CD4-positive, alpha-beta T cell (primary cell): ENCODE measurements at regions of chr18 and their contacts with region 1.

Region 1: GRCh38 chr18:77207540-77207939 is 42.1 kb upstream of the GALR1 start:
- DNase-seq: peak; percentile 19 to 84 (median 54)
- ATAC-seq: peak; percentile 97
- H3K4me3 ChIP-seq: no peak overlapping the region
- H3K4me3 Mint-ChIP-seq: peak overlapping the region; percentile 92
- H3K27ac ChIP-seq: no peak overlapping the region
- H3K27ac Mint-ChIP-seq: peak overlapping the region; percentile 78
- H3K4me1 ChIP-seq: peaks cover 33% of the 10 kb centered on the region
- H3K4me1 Mint-ChIP-seq: peaks cover 51% of the 10 kb centered on the region
- H3K27me3 ChIP-seq: no peaks in the 10 kb centered on the region
- H3K27me3 Mint-ChIP-seq: no peaks in the 10 kb centered on the region
- CTCF ChIP-seq: peak; percentile 76

Region 2: GRCh38 chr18:76922107-76922506 is 285.4 kb before region 1 on chr18:
- CTCF ChIA-PET with region 1: interaction called, 3 read pairs
- POLR2A ChIA-PET with region 1: no interaction called
- intact Hi-C with region 1: loop called in 1 of 2 experiments (anchors 1 kb)
- DNase-seq: peak; percentile 31 to 75 (median 46)
- ATAC-seq: peak; percentile 99
- H3K4me3 ChIP-seq: no peak overlapping the region
- H3K4me3 Mint-ChIP-seq: no peak overlapping the region
- H3K27ac ChIP-seq: no peak overlapping the region
- H3K27ac Mint-ChIP-seq: peak overlapping the region; percentile 1
- H3K4me1 ChIP-seq: peaks cover 3% of the 10 kb centered on the region
- H3K4me1 Mint-ChIP-seq: peaks cover 22% of the 10 kb centered on the region
- H3K27me3 ChIP-seq: no peaks in the 10 kb centered on the region
- H3K27me3 Mint-ChIP-seq: no peaks in the 10 kb centered on the region
- CTCF ChIP-seq: peak; percentile 68

Region 3: DNA sequence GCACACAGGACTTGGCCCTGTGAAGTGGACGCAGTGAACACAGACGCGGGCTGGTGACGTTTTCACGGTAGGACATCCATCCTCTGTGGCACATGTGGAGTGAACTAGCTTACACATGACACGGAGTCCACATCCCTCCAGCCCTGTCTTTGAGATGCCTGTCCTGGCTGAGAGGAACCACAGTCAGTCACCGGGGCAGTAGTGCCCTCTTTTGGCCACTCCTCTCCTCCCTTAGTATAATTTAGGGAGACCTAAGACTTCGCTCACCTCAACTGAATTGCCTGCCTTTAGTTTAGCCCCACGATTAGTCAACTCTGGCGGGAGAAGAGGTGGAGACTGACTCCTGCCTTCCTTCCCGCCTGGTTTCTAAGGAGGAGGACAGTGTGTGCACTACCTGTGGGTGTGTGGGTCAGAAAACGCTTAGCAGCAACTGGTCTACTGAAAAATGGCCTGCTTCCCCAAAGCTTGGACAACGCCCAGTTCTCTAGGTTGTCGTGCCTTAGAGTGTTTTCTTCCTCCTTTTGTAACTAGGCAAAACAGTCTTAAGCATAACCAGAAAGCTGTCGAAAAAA is 145.5 kb before region 1 on chr18:
- CTCF ChIA-PET with region 1: interaction called, 7 read pairs
- POLR2A ChIA-PET with region 1: interaction called, 3 read pairs
- intact Hi-C with region 1: loop called (anchors 2 to 5 kb)
- DNase-seq: peak in 7 of 14 experiments; percentile 24 to 74 (median 52)
- ATAC-seq: peak; percentile 9
- H3K4me3 ChIP-seq: peak overlapping the region; percentile 28
- H3K4me3 Mint-ChIP-seq: peak overlapping the region; percentile 55
- H3K27ac ChIP-seq: peak overlapping the region; percentile 89 to 93
- H3K27ac Mint-ChIP-seq: peak overlapping the region; percentile 98
- H3K4me1 ChIP-seq: peaks cover 91% of the 10 kb centered on the region
- H3K4me1 Mint-ChIP-seq: peaks cover 82% of the 10 kb centered on the region
- H3K27me3 ChIP-seq: no peaks in the 10 kb centered on the region
- H3K27me3 Mint-ChIP-seq: no peaks in the 10 kb centered on the region
- CTCF ChIP-seq: no peak

Region 4: DNA sequence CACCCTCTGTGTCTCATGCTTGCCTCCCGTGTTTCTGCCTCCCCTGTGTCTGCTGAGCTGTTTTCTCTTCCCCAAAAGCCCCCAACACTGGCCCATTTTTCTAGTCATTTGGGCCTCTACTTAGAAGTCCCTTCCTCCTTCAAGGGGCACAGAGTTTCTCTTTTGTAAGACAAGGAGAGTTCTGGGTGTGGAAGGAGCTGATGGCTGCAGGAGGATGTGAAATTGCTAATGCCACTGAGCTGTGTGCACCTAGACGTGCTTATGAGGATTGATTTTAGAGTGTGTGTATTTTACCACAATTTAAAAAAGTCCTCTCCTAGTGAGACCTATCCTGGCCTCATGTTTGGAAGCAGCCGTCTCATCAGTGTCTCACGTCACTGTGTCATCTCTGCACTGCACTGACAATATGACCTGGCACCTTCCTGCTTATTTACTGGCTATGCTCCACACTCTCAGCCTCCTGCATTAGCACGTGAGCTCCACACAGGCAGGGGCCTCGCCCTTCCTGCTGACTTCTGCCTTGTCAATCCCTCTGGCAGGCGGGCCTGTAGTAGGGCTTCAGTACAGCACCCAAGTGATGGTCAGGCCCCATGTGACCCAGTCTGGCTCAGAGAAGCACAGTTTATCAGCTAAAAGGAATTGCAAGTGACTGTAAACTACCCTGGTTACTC is 67.0 kb before region 1 on chr18:
- CTCF ChIA-PET with region 1: interaction called, 3 read pairs
- POLR2A ChIA-PET with region 1: interaction called, 6 read pairs
- intact Hi-C with region 1: loop called in 1 of 2 experiments (anchors 5 kb)
- DNase-seq: peak in 13 of 14 experiments; percentile 24 to 83 (median 61)
- ATAC-seq: peak; percentile 98
- H3K4me3 ChIP-seq: no peak overlapping the region
- H3K4me3 Mint-ChIP-seq: peak overlapping the region; percentile 18
- H3K27ac ChIP-seq: peak overlapping the region in 1 of 2 donors; percentile 57
- H3K27ac Mint-ChIP-seq: peak overlapping the region; percentile 88
- H3K4me1 ChIP-seq: peaks cover 29% of the 10 kb centered on the region
- H3K4me1 Mint-ChIP-seq: peaks cover 43% of the 10 kb centered on the region
- H3K27me3 ChIP-seq: no peaks in the 10 kb centered on the region
- H3K27me3 Mint-ChIP-seq: no peaks in the 10 kb centered on the region
- CTCF ChIP-seq: no peak

Region 5: DNA sequence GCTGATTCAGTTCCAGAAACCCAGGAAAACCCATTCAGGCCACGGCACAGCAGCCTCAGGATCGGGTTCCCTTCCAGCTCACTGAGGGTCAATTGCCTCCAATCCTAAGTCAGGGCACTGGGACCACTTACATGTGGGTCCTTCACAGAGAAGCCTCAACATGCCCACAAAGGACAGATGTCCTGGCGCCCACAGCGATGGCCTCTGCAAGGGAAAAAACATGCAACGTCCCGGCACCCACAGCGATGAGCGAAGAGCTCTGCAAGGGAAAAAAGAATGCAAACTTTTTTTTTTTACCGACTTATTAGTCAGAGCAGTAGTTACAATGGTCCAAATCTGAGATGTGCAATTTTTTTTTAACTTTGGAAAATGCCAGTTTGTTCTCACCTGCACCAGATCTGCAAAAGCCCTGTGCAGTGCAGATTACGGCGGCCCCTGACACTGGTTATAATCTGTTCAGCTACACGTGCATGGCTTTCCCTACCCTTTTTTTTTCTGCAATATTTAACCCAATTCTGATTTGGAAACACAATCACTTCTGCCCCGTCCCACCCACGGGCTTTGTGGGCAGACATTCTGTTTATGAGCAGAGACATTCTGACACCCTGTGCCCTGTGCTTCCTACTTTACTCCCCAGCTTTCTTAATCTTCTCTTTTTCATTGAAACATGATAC is 1612.8 kb after region 1 on chr18:
- CTCF ChIA-PET with region 1: no interaction called
- POLR2A ChIA-PET with region 1: no interaction called
- intact Hi-C with region 1: no loop called
- DNase-seq: no peak
- ATAC-seq: no peak
- H3K4me3 ChIP-seq: no peak overlapping the region
- H3K4me3 Mint-ChIP-seq: no peak overlapping the region
- H3K27ac ChIP-seq: no peak overlapping the region
- H3K27ac Mint-ChIP-seq: no peak overlapping the region
- H3K4me1 ChIP-seq: no peaks in the 10 kb centered on the region
- H3K4me1 Mint-ChIP-seq: no peaks in the 10 kb centered on the region
- H3K27me3 ChIP-seq: peaks cover 0 to 2% of the 10 kb centered on the region in 2 experiments
- H3K27me3 Mint-ChIP-seq: peaks cover 33% of the 10 kb centered on the region
- CTCF ChIP-seq: no peak